ENCODE measurements at regions of chr16 and their contacts with region 1.

Region 1: DNA sequence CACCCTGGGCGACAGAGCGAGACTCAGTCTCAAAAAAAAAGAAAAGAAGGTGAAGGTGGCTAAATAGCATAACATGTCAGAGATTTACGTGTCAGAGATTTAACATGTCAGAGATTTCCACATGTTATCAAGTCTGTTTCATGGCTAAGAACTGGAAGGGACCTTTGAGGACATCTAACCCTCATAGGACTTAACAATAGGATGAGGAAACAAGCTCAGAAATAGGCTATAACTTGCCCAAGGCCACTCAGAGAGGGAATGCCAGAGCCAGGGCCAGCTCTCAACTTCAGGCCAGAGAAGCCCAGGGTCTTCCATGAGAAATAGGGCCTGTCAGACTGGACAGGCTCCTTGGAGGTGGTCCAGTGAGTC is 26.8 kb upstream of the ZNF629 start:
- DNase-seq: no peak
- H3K4me3 ChIP-seq: peak overlapping the region; percentile 2 to 26 (median 10)
- H3K27ac ChIP-seq: peak overlapping the region; percentile 44
- H3K4me1 ChIP-seq: peaks cover 4% of the 10 kb centered on the region
- H3K27me3 ChIP-seq: no peaks in the 10 kb centered on the region
- CTCF ChIP-seq: no peak
- POLR2A ChIP-seq: no peak

Region 2: DNA sequence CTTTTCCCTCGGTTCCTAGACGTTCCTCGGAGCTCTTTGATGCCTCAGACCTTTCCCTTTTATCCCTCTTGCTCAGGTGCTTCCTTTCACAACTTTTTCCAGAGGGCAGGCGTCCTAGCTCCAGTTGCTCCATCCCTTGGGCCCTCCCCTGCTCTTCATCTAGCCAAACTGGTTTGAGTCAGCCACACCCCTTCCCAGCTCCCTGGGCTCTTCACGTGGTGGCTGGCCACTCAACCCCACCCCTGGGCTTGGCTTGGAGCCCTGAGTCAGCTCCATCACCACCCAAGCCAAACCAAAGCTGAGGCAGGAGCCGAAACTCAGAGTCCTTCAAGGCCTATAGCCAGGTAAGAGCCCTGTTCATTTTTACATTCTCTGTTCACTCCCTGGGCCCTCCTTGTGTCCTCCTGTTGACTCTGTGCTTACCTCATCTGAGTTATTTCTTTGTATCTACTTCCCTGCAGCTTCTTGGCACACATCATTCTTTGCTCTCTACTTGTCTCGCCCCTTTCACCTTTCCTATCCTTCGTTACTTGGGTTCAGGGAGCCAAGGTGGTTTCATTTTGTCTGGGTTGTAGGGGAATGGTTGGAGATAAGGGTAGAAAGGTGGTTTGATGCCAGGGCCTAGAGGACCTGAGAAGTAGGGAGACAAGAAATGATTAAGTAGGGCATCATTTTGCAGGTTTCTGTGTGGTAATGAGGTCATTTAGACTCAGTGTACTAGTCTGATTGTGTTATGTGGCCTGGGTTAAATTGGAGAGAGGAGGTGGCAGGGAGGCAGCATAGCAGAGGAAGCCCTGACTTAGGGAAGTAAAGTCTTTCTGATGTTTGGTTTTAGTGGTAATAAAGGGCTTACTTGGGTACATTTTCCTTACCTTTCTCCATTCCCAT is 73.2 kb before region 1 on chr16:
- CTCF ChIA-PET with region 1: no interaction called
- POLR2A ChIA-PET with region 1: no interaction called
- dilution Hi-C with region 1: no loop called
- intact Hi-C with region 1: loop called (anchors 2 kb)
- DNase-seq: peak; percentile 19
- H3K4me3 ChIP-seq: no peak overlapping the region
- H3K27ac ChIP-seq: peak overlapping the region; percentile 83
- H3K4me1 ChIP-seq: peaks cover 20% of the 10 kb centered on the region
- H3K27me3 ChIP-seq: no peaks in the 10 kb centered on the region
- CTCF ChIP-seq: no peak
- POLR2A ChIP-seq: no peak

Region 3: DNA sequence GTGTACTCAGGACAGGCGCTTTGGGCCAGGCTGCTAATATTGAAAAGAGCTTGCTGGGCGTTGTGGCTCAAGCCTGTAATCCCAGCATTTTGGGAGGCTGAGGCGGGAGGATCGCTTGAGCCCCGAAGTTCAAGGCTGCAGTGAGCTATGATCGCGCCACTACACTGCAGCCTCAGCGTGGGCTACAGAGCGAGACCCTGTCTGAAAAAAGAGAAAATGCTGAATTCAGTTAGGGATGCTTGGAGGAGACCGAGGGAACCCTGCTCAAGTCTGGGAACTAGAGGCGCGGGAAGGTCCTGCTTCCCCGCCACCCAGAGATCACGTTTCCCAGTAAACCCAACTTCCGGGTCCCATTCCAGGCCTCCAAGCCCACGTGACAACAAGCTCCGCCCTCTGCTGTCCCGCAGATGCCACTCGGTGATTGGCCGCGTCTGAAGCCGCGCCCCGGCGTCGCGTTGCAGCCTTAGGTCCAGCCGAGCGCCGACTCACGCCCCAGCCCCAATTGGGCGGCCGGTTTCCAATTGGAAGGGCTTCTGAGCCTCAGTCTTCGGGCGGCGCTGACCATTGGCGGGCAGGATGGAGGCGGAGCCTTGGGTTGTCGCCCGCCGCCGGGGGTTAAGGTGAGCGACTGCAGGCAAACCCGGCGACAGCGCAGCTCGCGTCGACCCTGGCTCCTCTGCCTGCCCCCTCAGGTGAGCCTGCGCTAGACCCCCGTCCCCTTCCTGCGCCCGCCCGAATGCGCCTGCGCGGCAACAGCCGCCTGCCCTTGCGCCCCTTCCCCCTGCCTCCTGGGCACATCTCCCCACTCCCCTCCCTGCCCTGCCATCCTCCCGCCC is 65.8 kb before region 1 on chr16 and contains the start of gene PHKG2:
- CTCF ChIA-PET with region 1: interaction called, 3 read pairs
- POLR2A ChIA-PET with region 1: no interaction called
- dilution Hi-C with region 1: no loop called
- intact Hi-C with region 1: loop called (anchors 1 kb)
- DNase-seq: peak; percentile 99
- H3K4me3 ChIP-seq: peak within 1 kb of the TSS; percentile 14 to 86 (median 49)
- H3K27ac ChIP-seq: peak within 1 kb of the TSS; percentile 47
- H3K4me1 ChIP-seq: peaks cover 7% of the 10 kb centered on the region
- H3K27me3 ChIP-seq: no peaks in the 10 kb centered on the region
- CTCF ChIP-seq: no peak
- POLR2A ChIP-seq: peak; percentile 92
- total RNA-seq, gene PHKG2: 33.0 and 34.1 TPM in 2 replicates

Region 4: DNA sequence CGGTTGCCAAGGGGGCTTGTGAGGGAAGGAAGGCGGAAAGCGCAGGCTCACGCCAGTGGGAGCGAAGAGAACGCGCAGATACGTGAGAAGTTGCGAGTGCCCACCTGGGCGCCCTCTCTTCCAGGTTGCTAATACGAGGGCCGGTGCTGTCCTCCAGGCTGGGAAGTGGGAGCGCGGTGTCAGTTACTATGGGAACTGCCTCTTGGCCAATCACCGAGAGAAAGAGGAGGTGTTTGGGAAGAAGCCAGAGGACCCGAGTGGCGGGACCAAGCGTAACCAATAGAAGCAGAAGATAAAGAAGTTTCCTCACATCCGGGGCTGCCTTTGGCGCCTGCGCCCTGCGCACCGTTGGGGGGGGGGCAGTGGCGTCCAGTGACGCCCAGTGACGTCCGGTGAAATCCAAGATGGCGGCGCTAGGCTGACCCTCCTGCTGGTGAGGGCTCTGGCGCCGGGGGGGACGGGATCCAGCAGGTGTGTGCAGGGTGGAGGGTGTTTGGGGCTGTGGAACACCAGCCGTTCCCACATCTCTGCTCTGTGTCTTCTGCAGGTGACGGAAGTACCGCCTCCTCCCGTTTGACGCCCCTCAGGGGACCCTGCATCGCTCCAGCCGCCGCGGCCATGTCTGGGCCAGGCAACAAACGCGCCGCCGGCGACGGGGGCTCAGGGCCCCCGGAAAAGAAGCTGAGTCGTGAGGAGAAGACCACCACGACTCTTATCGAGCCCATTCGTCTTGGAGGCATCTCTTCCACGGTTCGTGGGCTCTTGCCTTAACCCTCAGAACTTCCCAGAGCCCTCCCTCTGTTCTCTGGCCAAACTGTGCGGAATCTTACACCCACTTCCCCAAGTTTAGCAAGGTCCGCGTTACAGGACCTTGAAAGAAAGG is 51.6 kb before region 1 on chr16 and contains the starts of genes CFAP119 and RNF40:
- CTCF ChIA-PET with region 1: no interaction called
- POLR2A ChIA-PET with region 1: no interaction called
- dilution Hi-C with region 1: no loop called
- intact Hi-C with region 1: loop called (anchors 1 kb)
- DNase-seq: peak; percentile 99
- H3K4me3 ChIP-seq: peak within 1 kb of the TSS; percentile 19 to 87 (median 75)
- H3K27ac ChIP-seq: peak within 1 kb of the TSS; percentile 47
- H3K4me1 ChIP-seq: peaks cover 15% of the 10 kb centered on the region
- H3K27me3 ChIP-seq: no peaks in the 10 kb centered on the region
- CTCF ChIP-seq: no peak
- POLR2A ChIP-seq: peak; percentile 89
- total RNA-seq, gene CFAP119: 6.5 and 7.2 TPM in 2 replicates
- total RNA-seq, gene RNF40: 97.0 and 102 TPM in 2 replicates

Region 5: GRCh38 chr16:30775392-30776188 is 38.2 kb before region 1 on chr16:
- CTCF ChIA-PET with region 1: interaction called, 9 read pairs
- POLR2A ChIA-PET with region 1: no interaction called
- dilution Hi-C with region 1: no loop called
- intact Hi-C with region 1: loop called (anchors 1 kb)
- DNase-seq: peak; percentile 77
- H3K4me3 ChIP-seq: peak overlapping the region; percentile 20 to 62 (median 56)
- H3K27ac ChIP-seq: peak overlapping the region; percentile 26
- H3K4me1 ChIP-seq: peaks cover 8% of the 10 kb centered on the region
- H3K27me3 ChIP-seq: no peaks in the 10 kb centered on the region
- CTCF ChIP-seq: no peak
- POLR2A ChIP-seq: peak; percentile 88

Region 6: DNA sequence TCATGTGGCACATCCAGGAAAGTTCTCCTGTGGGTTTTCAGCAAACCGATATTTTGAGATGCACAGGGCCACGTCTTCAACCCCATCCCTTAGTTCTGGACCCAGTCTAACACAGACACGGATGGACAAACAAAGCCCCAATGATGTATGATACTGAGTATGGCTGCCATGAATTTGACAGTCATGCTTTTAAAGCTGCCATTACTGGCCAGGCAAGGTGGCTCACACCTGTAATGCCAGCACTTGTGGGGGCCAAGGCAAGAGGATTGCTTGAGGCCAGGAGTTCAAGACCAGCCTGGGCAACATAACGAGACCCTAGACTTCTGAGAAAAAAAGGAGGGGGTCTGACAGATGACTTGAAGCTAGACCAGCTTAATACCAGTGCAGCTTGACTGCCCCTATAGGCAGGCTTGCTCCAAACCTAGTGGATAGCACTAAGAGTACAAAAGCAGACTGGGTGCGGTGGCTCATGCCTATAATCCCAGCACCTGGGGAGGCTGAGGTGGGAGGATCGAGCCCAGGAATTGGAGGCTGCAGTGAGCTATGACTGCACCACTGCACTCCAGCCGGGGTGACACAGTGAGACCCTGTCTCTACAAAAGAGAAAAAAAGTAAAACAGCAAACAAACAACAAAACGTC is 16.0 kb before region 1 on chr16:
- CTCF ChIA-PET with region 1: interaction called, 13 read pairs
- POLR2A ChIA-PET with region 1: no interaction called
- dilution Hi-C with region 1: no loop called
- intact Hi-C with region 1: no loop called
- DNase-seq: no peak
- H3K4me3 ChIP-seq: no peak overlapping the region
- H3K27ac ChIP-seq: no peak overlapping the region
- H3K4me1 ChIP-seq: no peaks in the 10 kb centered on the region
- H3K27me3 ChIP-seq: no peaks in the 10 kb centered on the region
- CTCF ChIP-seq: peak in 1 of 2 donors; percentile 6
- POLR2A ChIP-seq: no peak

Measured in endothelial cell of umbilical vein (primary cell).